ENCODE measurements at regions of chr1 and their contacts with region 1.

Region 1: DNA sequence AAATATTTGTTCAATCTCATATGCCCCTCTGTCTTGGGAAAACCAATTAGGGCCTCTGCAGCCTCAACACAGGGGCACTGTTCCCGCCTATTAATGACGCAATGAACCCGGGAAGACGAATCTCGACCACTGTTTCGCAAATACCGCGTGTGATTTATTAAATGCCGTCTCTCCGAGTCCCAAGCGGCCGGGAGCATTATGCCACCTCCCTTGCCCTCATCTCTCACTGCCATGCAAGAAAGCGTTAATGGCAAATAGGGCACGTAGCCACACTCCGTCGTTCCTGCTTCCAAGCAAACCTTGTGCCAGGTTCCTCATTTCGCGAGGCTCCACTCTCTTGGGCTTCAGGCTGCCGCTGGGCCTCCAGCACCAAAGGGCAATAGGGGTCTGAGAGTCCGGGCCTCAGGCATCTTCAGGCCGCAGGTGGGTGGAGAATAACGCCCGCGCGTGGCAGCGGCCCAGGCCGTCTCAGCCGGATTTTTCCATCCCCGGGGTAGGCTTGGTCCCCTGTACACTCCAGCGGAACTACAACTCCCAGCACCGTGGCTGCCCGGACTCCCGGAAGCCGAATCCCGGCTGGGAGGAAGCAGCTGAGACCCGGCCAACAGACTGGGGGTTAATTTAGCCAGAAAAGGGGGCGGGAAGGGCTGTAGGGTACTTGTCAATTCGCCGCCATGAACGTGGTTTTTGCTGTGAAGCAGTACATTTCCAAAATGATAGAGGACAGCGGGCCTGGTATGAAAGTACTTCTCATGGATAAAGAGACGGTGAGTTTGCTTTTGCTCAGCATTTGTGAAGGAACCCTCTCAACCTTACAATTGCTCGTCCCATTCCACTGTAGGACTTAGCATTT is at the start of gene VPS45:
- DNase-seq: peak; percentile 53 to 85 (median 70)
- ATAC-seq: peak; percentile 96
- H3K4me3 ChIP-seq: peak within 1 kb of the TSS; percentile 72
- H3K4me3 Mint-ChIP-seq: peak within 1 kb of the TSS; percentile 91 to 95 (median 94)
- H3K27ac ChIP-seq: peak within 1 kb of the TSS; percentile 63
- H3K27ac Mint-ChIP-seq: peak within 1 kb of the TSS; percentile 88 to 96 (median 92)
- H3K4me1 ChIP-seq: peaks cover 0 to 8% of the 10 kb centered on the region in 2 donors
- H3K4me1 Mint-ChIP-seq: peaks cover 16 to 46% (median 37%) of the 10 kb centered on the region in 7 donors
- H3K27me3 ChIP-seq: no peaks in the 10 kb centered on the region
- H3K27me3 Mint-ChIP-seq: peaks cover 0 to 3% (median 0%) of the 10 kb centered on the region in 5 donors
- total RNA-seq, gene VPS45: 20.3 to 37.7 (median 29.3) TPM

Region 2: DNA sequence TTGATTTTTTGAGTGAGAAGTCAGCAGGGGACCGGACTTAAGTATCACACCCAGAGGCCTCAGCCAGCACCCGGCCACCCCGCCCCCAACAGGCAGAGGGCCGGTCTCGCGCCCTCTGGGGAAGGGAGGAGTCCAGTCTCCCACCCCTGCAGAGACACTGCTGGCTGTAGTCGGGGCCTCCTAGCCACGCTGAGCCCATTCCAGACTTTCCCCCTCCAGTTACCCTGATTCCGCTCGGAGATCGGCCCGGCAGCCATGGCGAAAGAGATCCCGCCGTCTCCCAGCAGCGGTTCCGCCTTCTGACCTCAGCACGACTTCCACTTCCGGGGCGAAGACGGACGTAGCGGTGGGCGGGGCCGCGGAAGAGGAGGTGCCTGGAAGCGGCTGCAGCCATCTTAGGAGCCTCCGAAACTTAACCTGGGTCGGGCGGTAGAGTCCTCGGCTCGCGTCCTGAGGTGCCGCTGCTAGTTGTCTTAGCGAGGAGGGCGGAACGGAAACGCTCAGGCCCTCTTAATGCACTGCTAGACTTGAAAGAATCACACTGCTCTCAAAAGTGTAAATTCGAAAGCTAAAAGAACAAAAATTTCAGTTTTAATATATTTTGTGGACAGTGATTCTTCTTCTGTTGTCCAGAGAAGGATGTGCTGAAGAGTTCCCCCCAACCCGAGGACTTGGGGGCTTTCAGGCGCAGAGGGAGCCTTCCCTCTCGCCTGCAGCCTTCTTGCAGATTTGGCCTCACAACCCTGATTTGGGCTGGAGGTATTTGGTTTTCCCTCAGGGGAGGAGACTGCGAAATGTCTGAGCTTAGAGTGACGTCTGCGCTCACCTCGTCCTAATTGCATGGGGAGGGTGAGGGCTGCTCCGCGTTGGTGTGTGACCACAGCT is 139.7 kb before region 1 on chr1 and contains the start of gene SF3B4:
- CTCF ChIA-PET with region 1: no interaction called
- POLR2A ChIA-PET with region 1: interaction called, 3 read pairs
- intact Hi-C with region 1: loop called in 1 of 2 experiments (anchors 1 kb)
- DNase-seq: peak; percentile 89 to 96 (median 95)
- ATAC-seq: peak; percentile 98
- H3K4me3 ChIP-seq: peak within 1 kb of the TSS; percentile 82
- H3K4me3 Mint-ChIP-seq: peak within 1 kb of the TSS; percentile 91 to 99 (median 96)
- H3K27ac ChIP-seq: peak within 1 kb of the TSS; percentile 94
- H3K27ac Mint-ChIP-seq: peak within 1 kb of the TSS; percentile 96 to 99 (median 98)
- H3K4me1 ChIP-seq: peaks cover 19 to 30% of the 10 kb centered on the region in 2 donors
- H3K4me1 Mint-ChIP-seq: peaks cover 44 to 67% (median 49%) of the 10 kb centered on the region in 7 donors
- H3K27me3 ChIP-seq: no peaks in the 10 kb centered on the region
- H3K27me3 Mint-ChIP-seq: peaks cover 0 to 13% (median 5%) of the 10 kb centered on the region in 5 donors
- total RNA-seq, gene SF3B4: 39.0 to 103 (median 43.4) TPM

Region 3: DNA sequence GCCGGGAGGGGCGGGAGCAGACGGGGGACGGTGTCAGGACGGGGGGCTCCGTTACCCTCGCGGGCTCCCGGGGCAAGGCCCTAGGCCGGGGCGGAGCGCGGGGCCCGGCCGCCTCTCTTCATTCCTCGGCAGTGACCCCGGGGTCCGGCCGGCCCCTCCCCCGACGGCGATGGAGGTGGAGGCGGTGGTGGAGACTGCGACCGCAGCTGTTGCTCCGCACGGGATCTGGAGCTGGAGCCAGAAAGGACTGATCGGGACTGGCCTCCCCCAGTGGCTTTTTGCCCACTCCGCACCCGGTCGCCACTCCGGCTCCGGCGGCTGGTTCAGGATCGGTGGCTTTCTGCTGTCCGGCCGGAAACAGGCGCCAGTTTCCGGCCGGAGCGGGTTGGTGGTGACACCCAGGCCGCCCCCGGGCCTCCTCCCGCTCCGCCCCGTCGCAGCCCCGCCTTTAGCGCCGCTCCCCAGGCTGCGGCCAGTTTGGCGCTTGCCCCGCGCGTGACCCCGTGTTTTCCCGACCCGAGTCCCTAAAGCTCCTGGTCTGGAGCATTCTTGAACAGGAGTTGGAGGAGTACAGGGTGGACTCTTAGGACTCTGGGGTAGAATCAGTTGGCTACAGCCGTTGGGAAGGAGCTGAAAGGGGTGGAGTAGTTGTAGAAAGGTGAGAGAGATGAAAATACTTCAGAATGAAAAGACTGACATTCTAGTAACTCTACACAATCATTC is 56.9 kb before region 1 on chr1 and contains the start of gene OTUD7B:
- CTCF ChIA-PET with region 1: interaction called, 3 read pairs
- POLR2A ChIA-PET with region 1: interaction called, 6 read pairs
- intact Hi-C with region 1: loop called (anchors 1 to 5 kb)
- DNase-seq: peak; percentile 5 to 85 (median 46)
- ATAC-seq: peak; percentile 92
- H3K4me3 ChIP-seq: peak within 1 kb of the TSS; percentile 89
- H3K4me3 Mint-ChIP-seq: peak within 1 kb of the TSS; percentile 88 to 99 (median 96)
- H3K27ac ChIP-seq: peak within 1 kb of the TSS; percentile 73
- H3K27ac Mint-ChIP-seq: peak within 1 kb of the TSS; percentile 85 to 93 (median 87)
- H3K4me1 ChIP-seq: peaks cover 8 to 12% of the 10 kb centered on the region in 2 donors
- H3K4me1 Mint-ChIP-seq: peaks cover 21 to 38% (median 31%) of the 10 kb centered on the region in 7 donors
- H3K27me3 ChIP-seq: no peaks in the 10 kb centered on the region
- H3K27me3 Mint-ChIP-seq: peaks cover 0 to 12% (median 0%) of the 10 kb centered on the region in 5 donors
- total RNA-seq, gene OTUD7B: 4.6 to 12.8 (median 9.7) TPM

Region 4: GRCh38 chr1:150149271-150150132 is 82.1 kb after region 1 on chr1 and contains the start of gene PLEKHO1:
- CTCF ChIA-PET with region 1: interaction called, 243 read pairs
- POLR2A ChIA-PET with region 1: interaction called, 11 read pairs
- intact Hi-C with region 1: loop called in 1 of 2 experiments (anchors 1 kb)
- DNase-seq: peak; percentile 53 to 84 (median 65)
- ATAC-seq: peak; percentile 86
- H3K4me3 ChIP-seq: peak within 1 kb of the TSS; percentile 89
- H3K4me3 Mint-ChIP-seq: peak within 1 kb of the TSS; percentile 89 to 99 (median 96)
- H3K27ac ChIP-seq: peak within 1 kb of the TSS; percentile 77
- H3K27ac Mint-ChIP-seq: peak within 1 kb of the TSS; percentile 87 to 99 (median 97)
- H3K4me1 ChIP-seq: peaks cover 21 to 38% of the 10 kb centered on the region in 2 donors
- H3K4me1 Mint-ChIP-seq: peaks cover 42 to 79% (median 74%) of the 10 kb centered on the region in 7 donors
- H3K27me3 ChIP-seq: no peaks in the 10 kb centered on the region
- H3K27me3 Mint-ChIP-seq: peaks cover 0 to 26% (median 0%) of the 10 kb centered on the region in 5 donors
- total RNA-seq, gene PLEKHO1: 64.9 to 111 (median 94.1) TPM

Region 5: DNA sequence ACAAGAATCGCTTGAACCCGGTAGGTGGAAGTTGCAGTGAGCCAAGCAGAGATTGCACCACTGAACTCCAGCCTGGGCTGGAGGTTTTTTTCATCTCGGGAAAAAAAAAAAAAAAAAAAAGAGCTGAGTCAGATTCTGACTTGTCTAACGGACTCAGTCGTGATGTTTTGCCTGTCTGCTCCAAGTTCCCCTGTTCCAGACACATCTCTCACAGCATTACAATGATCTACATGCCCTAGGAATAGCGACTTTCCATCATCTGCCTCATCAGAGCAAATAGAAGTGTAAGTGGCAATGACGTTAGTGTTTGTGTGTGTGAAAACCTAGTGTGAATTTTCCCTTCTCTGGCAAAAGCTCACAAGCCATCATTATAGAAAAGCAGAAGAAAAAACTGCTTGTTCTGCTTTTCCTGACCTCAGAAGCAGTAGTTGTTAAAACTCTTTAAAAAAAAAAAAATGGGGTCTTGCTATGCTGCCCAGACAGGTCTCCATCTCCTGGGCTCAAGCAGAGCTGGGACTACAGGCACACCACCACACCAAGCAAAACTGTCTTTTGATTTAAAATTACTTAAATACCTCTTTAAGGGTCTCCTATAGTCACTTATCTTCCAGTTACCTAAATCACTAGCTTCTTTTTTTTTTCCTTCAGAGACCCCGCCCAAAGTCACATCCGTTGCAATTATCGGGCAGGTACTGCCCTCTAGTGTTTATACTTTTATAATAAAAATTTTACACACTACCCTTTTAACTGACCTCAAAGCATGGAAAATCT is 119.6 kb after region 1 on chr1:
- CTCF ChIA-PET with region 1: interaction called, 57 read pairs
- POLR2A ChIA-PET with region 1: interaction called, 13 read pairs
- intact Hi-C with region 1: no loop called
- DNase-seq: peak in 7 of 9 donors; percentile 28 to 77 (median 68)
- ATAC-seq: peak; percentile 87
- H3K4me3 ChIP-seq: no peak overlapping the region
- H3K4me3 Mint-ChIP-seq: peak overlapping the region in 7 of 10 donors; percentile 6 to 74 (median 35)
- H3K27ac ChIP-seq: no peak overlapping the region
- H3K27ac Mint-ChIP-seq: peak overlapping the region in 7 of 9 donors; percentile 9 to 70 (median 33)
- H3K4me1 ChIP-seq: peaks cover 0 to 4% of the 10 kb centered on the region in 2 donors
- H3K4me1 Mint-ChIP-seq: peaks cover 7 to 13% (median 10%) of the 10 kb centered on the region in 7 donors
- H3K27me3 ChIP-seq: no peaks in the 10 kb centered on the region
- H3K27me3 Mint-ChIP-seq: no peaks in the 10 kb centered on the region

Region 6: DNA sequence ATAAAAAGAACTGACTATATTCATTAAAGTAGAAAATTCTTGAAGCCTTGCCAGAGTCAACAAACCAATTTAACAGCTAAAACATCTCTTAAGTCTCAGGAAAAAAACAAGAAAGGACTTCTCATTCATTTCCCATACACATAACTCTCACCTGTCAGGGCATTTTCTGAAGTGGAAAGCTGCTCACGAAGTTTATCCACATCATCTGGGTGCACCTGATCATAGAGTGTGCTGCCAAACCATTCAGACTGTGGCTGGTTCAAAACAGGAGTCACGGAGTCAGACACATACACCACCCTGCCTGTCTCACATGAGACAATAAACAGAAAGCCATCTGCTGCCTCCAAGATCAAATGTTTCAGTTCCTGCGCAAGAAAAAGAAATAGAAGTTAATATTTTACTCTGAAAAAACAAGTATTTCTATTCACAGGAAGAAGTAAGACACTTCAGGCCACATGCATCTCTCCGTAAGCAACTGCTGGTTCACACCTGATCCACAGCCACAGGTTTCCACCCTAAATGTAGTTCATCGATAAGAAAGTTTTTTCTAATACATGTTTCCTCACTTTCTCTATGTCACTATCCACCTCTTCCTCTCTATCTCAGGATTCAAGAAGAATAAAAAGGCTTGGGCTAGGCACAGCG is 768.8 kb after region 1 on chr1:
- CTCF ChIA-PET with region 1: no interaction called
- POLR2A ChIA-PET with region 1: no interaction called
- intact Hi-C with region 1: no loop called
- DNase-seq: no peak
- ATAC-seq: no peak
- H3K4me3 ChIP-seq: no peak overlapping the region
- H3K4me3 Mint-ChIP-seq: no peak overlapping the region
- H3K27ac ChIP-seq: no peak overlapping the region
- H3K27ac Mint-ChIP-seq: peak overlapping the region in 1 of 9 donors; percentile 39
- H3K4me1 ChIP-seq: peaks cover 0 to 13% of the 10 kb centered on the region in 2 donors
- H3K4me1 Mint-ChIP-seq: peaks cover 10 to 32% (median 23%) of the 10 kb centered on the region in 7 donors
- H3K27me3 ChIP-seq: no peaks in the 10 kb centered on the region
- H3K27me3 Mint-ChIP-seq: no peaks in the 10 kb centered on the region

Measured in naive thymus-derived CD4-positive, alpha-beta T cell (primary cell).